ENCODE measurements at regions of chr5 and their contacts with region 1.

Region 1: DNA sequence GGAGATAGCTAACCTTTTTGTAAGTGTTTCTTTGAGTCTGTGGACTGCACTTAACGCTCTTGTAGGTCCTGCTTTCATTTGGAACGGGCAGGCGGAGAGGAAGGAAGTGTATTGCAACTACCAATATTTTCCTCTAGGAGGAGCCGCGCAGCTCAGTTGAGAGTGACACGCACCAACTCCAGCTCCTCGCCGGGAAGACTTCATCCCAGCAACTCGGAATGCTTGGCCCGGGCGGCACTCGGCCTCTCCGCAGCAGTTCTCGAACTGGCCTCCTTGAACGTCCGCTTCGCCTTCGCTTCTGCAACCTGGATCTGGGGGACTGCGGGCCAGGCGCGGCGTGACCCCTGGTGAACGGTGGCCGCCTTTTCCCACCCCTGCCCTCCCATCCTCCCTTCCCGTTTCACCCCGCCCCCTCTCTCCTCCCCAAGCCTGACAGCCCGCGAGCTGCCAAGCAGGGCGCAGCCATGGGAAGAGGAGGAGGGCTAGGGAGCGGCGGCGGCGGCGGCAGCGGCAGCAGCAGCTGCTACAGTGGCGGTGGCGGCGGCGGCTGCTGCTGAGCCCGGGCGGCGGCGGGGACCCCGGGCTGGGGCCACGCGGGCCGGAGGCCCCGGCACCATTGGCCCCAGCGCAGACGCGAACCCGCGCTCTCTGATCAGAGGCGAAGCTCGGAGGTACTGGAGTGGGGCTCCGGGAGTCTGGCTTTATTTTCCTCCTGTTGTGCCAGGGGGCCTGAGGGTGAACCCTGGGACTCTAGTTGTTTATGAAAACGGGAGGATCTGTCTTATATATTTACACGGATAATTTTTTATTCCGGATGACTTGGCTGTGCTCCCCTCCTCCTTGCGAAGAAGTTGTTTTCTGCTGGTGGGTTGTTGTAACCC is at the start of gene GHR:
- DNase-seq: peak; percentile 97
- total RNA-seq, gene GHR: 60.6 and 70.5 TPM in 2 replicates

Region 2: GRCh38 chr5:42366051-42366450 is 57.5 kb before region 1 on chr5:
- in situ Hi-C with region 1: no loop called
- DNase-seq: no peak

Region 3: DNA sequence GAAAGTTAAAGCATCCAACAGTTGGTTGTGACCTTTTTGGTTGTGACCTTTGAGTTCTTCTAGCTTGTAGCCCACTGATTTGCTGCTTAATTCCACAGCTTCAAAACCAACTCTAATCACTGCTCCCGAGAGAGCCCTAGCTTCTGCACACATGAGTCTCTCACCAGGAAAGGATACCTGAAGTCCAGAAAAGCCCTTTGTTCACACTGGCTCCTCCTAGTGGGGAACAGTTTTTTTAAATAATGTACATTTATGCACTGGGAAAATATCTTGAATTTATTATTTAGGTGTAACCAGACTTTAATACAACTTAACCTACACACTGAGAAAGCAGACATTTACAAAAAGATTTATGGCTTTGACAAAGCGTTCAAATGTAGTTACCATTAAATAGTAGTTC is 212.9 kb after region 1 on chr5:
- in situ Hi-C with region 1: loop called (anchors 25 kb)
- DNase-seq: peak; percentile 73